K562 (cell line): ENCODE measurements at regions of chr3 and their contacts with region 1.

Region 1: GRCh38 chr3:25664810-25665314 is at the start of gene TOP2B:
- DNase-seq: peak; percentile 98 to 99 (median 99)
- ATAC-seq: peak; percentile 95
- H3K4me3 ChIP-seq: peak within 1 kb of the TSS; percentile 75
- H3K27ac ChIP-seq: peak within 1 kb of the TSS; percentile 93
- H3K4me1 ChIP-seq: peaks cover 9 to 20% of the 10 kb centered on the region in 2 experiments
- H3K27me3 ChIP-seq: no peaks in the 10 kb centered on the region
- CTCF ChIP-seq: no peak
- EP300 ChIP-seq: peak; percentile 4; the same call in 1 of the 2 replicates
- POLR2A ChIP-seq: peak; percentile 94
- RAD21 ChIP-seq: no peak
- polyA plus RNA-seq, gene TOP2B: 45.3 to 57.8 TPM

Region 2: GRCh38 chr3:25789596-25790556 is 125.0 kb after region 1 on chr3 and contains the start of gene OXSM:
- CTCF ChIA-PET with region 1: no interaction called
- POLR2A ChIA-PET with region 1: interaction called, 4 read pairs
- in situ Hi-C with region 1: no loop called
- intact Hi-C with region 1: loop called (anchors 2 kb)
- DNase-seq: peak; percentile 91 to 99 (median 94)
- ATAC-seq: peak; percentile 91
- H3K4me3 ChIP-seq: peak within 1 kb of the TSS; percentile 54
- H3K27ac ChIP-seq: peak within 1 kb of the TSS; percentile 90
- H3K4me1 ChIP-seq: peaks cover 0 to 35% of the 10 kb centered on the region in 2 experiments; a peak in 2 of 5 replicates
- H3K27me3 ChIP-seq: no peaks in the 10 kb centered on the region
- CTCF ChIP-seq: peak in 1 of 3 experiments; percentile 24; a peak in 1 of 6 replicates
- EP300 ChIP-seq: peak; percentile 67; the same call in 1 of the 2 replicates
- POLR2A ChIP-seq: peak; percentile 97
- RAD21 ChIP-seq: no peak
- polyA plus RNA-seq, gene OXSM: 97.9 to 107 TPM